CD4-positive, alpha-beta memory T cell (primary cell): ENCODE measurements at regions of chr16 and their contacts with region 1.

Region 1: GRCh38 chr16:53449632-53450517 is 15.6 kb downstream of the RBL2 start:
- DNase-seq: peak in 1 of 5 donors; percentile 17
- H3K4me3 ChIP-seq: peak overlapping the region in 1 of 2 donors; percentile 10
- H3K4me3 Mint-ChIP-seq: peak overlapping the region; percentile 74 to 88 (median 84)
- H3K27ac ChIP-seq: peak overlapping the region; percentile 14
- H3K27ac Mint-ChIP-seq: peak overlapping the region; percentile 77 to 90 (median 85)
- H3K4me1 ChIP-seq: peaks cover 80% of the 10 kb centered on the region
- H3K4me1 Mint-ChIP-seq: peaks cover 43 to 82% (median 61%) of the 10 kb centered on the region in 4 donors
- H3K27me3 ChIP-seq: no peaks in the 10 kb centered on the region
- H3K27me3 Mint-ChIP-seq: no peaks in the 10 kb centered on the region

Region 2: DNA sequence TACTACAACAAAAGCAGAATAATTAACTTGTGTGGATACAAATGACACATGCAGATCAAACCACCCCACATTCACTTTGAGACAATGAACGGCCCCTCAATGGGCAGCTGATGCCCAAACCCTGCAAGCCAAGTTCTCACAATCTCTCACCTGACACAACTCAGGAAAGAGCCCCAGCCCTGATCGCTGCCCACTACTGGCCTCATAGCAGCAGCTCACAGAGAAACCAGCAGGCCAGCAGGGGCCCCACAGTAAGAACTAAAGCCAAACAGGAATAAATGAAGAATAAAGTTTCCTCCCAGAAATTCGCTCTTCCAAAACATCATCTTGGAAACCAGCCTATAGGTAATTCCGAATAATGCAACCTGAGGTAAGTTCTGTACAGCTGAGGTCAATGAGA is 45.5 kb after region 1 on chr16:
- CTCF ChIA-PET with region 1: interaction called, 5 read pairs
- POLR2A ChIA-PET with region 1: interaction called, 276 read pairs
- intact Hi-C with region 1: no loop called
- DNase-seq: no peak
- H3K4me3 ChIP-seq: no peak overlapping the region
- H3K4me3 Mint-ChIP-seq: peak overlapping the region in 1 of 8 donors; percentile 25
- H3K27ac ChIP-seq: no peak overlapping the region
- H3K27ac Mint-ChIP-seq: peak overlapping the region in 6 of 7 donors; percentile 45 to 76 (median 74)
- H3K4me1 ChIP-seq: peaks cover 48% of the 10 kb centered on the region
- H3K4me1 Mint-ChIP-seq: peaks cover 31 to 76% (median 56%) of the 10 kb centered on the region in 4 donors
- H3K27me3 ChIP-seq: no peaks in the 10 kb centered on the region
- H3K27me3 Mint-ChIP-seq: no peaks in the 10 kb centered on the region